Activated naive CD4-positive, alpha-beta T cell treated with anti-CD3 and anti-CD28 coated beads for 36 hours (primary cell): ENCODE measurements at regions of chr7 and their contacts with region 1.

Region 1: GRCh38 chr7:150898475-150899011 is 46.2 kb downstream of the AOC1 start:
- DNase-seq: peak; percentile 86
- H3K4me3 Mint-ChIP-seq: no peak overlapping the region
- H3K27ac Mint-ChIP-seq: no peak overlapping the region
- H3K4me1 Mint-ChIP-seq: peaks cover 2% of the 10 kb centered on the region
- H3K27me3 Mint-ChIP-seq: peaks cover 20% of the 10 kb centered on the region

Region 2: GRCh38 chr7:150688630-150689029 is 209.9 kb before region 1 on chr7:
- CTCF ChIA-PET with region 1: no interaction called
- intact Hi-C with region 1: no loop called
- DNase-seq: no peak
- H3K4me3 Mint-ChIP-seq: peak overlapping the region; percentile 23
- H3K27ac Mint-ChIP-seq: peak overlapping the region; percentile 98
- H3K4me1 Mint-ChIP-seq: peaks cover 52% of the 10 kb centered on the region
- H3K27me3 Mint-ChIP-seq: no peaks in the 10 kb centered on the region

Region 3: DNA sequence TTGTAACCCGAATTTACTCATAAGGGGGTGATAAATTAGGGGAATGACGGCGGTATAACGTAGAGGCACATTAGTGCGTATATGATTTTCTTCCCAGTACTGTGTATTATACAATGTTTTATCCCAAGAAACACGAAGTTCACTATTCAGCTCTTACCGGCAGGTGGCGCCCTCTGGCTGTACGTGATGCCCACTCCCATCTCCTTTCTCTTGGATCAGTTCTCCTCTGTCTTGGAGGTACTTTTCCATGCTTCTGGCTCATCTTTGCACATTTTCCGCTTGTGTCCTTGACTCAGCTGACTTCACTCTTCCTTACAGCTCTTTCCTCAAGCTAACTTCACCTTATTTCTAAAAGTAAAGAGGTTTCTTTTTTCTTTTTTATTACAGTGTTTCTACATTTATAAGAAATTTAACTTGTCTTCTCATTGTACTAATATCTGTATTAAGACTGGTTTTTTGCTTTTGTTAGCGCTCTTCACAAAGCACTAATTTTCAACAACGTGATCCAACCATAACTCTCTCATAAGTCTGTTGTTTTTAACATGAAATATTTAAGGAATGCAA is 119.7 kb before region 1 on chr7:
- CTCF ChIA-PET with region 1: interaction called, 3 read pairs
- intact Hi-C with region 1: loop called (anchors 5 kb)
- DNase-seq: peak; percentile 87
- H3K4me3 Mint-ChIP-seq: no peak overlapping the region
- H3K27ac Mint-ChIP-seq: no peak overlapping the region
- H3K4me1 Mint-ChIP-seq: peaks cover 4% of the 10 kb centered on the region
- H3K27me3 Mint-ChIP-seq: peaks cover 3% of the 10 kb centered on the region

Region 4: DNA sequence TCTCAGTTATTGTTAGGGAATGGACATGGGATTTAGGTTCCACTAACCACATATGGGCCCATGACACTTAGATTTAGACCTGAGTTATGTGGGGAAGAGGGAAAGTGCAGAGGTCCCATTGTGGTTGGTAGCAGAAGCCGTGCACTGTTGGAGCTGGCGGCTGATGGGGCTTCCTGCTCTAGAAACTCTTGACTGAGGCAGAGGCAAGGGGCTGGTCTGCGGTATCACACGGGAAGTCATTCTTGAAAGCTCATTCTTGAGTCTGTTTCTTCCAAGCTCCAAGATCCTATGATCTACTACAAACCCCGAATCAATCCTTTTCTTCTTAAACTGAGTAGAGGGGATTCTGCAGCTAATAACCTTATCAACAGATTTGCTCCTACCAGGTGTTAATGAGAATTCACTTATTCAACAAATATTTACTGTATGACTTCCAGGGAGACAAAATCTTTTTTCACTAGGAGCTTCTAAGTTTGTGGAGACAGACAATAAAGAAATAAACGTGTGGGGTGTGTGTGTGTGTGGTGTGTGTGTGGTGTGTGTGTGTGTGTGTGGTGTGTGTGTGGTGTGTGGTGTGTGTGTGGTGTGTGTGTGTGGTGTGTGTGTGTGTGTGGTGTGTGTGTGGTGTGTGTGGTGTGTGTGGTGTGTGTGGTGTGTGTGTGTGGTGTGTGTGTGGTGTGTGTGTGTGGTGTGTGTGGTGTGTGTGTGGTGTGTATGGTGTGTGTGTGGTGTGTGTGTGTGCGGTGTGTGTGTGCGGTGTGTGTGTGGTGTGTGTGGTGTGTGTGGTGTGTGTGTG is 10.9 kb after region 1 on chr7:
- CTCF ChIA-PET with region 1: interaction called, 22 read pairs
- intact Hi-C with region 1: no loop called
- DNase-seq: peak; percentile 73
- H3K4me3 Mint-ChIP-seq: no peak overlapping the region
- H3K27ac Mint-ChIP-seq: no peak overlapping the region
- H3K4me1 Mint-ChIP-seq: peaks cover 8% of the 10 kb centered on the region
- H3K27me3 Mint-ChIP-seq: no peaks in the 10 kb centered on the region

Region 5: GRCh38 chr7:150962553-150963399 is 64.2 kb after region 1 on chr7:
- CTCF ChIA-PET with region 1: interaction called, 13 read pairs
- intact Hi-C with region 1: loop called (anchors 2 kb)
- DNase-seq: peak; percentile 68
- H3K4me3 Mint-ChIP-seq: no peak overlapping the region
- H3K27ac Mint-ChIP-seq: no peak overlapping the region
- H3K4me1 Mint-ChIP-seq: peaks cover 14% of the 10 kb centered on the region
- H3K27me3 Mint-ChIP-seq: peaks cover 16% of the 10 kb centered on the region

Region 6: DNA sequence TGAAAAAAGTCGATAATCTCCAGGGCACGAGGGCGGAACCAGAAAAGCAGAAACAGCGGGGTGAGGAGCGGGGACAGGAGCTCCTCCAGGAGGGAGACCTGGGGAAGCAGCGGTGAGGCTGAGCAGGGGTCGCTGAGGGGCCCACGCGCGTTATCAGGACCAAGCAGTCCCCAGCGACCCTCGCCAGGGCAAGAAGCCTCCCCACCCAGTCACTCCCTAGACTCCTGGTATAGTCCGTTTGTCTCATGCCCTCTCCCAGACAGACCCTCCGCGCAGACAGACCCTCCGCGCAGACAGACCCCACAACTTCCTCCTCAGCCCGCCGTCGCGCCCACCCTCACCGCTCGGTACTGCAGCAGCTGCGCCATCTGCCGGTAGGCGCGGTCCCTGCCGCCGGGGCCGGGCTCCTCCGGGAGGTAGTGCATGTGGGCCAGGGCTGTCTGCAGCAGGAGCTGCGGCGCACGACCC is 119.4 kb after region 1 on chr7:
- CTCF ChIA-PET with region 1: interaction called, 11 read pairs
- intact Hi-C with region 1: loop called (anchors 1 kb)
- DNase-seq: peak; percentile 82
- H3K4me3 Mint-ChIP-seq: peak overlapping the region; percentile 72
- H3K27ac Mint-ChIP-seq: no peak overlapping the region
- H3K4me1 Mint-ChIP-seq: peaks cover 50% of the 10 kb centered on the region
- H3K27me3 Mint-ChIP-seq: peaks cover 7% of the 10 kb centered on the region